ENCODE measurements at regions of chr5 and their contacts with region 1.

Region 1: GRCh38 chr5:99060306-99061261 is 131.8 kb upstream of the CHD1 start:
- DNase-seq: peak; percentile 66
- H3K4me3 ChIP-seq: no peak overlapping the region
- H3K27ac ChIP-seq: no peak overlapping the region
- H3K4me1 ChIP-seq: no peaks in the 10 kb centered on the region
- CTCF ChIP-seq: peak; percentile 99

Region 2: DNA sequence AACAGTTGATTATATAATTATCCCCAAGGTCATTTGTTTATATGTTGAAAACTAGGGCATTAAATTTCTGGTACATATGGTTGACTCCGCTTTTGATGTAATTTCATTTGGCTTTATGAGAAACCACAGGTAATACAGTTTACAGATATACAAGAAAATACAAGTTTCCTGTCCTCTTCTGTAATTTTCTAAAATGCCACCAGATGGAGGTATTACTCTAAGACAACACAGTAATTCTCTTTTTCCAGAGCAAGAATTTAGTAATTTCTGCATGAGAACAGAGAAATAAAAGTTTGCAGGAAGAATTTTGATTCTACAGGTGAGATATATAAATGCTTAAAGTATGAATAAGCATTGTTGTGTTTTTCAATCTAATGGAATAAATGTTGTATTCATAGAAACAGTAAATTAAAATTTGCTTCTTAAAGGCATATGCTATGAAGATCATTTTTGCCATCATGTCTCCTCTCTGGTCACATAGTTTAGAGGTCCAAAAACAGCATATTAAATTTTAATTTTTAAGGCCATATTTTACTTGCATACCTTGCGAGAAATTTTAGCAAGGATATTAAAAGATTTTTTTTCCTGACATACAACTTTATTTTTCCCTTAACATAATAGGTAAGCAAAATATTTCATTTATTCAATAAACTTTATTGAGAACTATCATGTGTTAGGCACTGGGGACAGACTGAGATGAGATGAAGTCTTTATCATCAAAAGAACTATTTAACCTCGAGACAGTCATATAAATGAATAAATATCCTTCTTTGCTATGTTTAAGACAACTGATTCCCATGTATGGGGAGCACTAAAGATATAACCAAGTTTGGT is 154.5 kb before region 1 on chr5:
- CTCF ChIA-PET with region 1: no interaction called
- POLR2A ChIA-PET with region 1: no interaction called
- intact Hi-C with region 1: loop called (anchors 1 kb)
- DNase-seq: peak; percentile 49
- H3K4me3 ChIP-seq: no peak overlapping the region
- H3K27ac ChIP-seq: no peak overlapping the region
- H3K4me1 ChIP-seq: no peaks in the 10 kb centered on the region
- CTCF ChIP-seq: peak; percentile 92

Region 3: GRCh38 chr5:99019812-99020697 is 40.5 kb before region 1 on chr5:
- CTCF ChIA-PET with region 1: no interaction called
- POLR2A ChIA-PET with region 1: no interaction called
- intact Hi-C with region 1: no loop called
- DNase-seq: no peak
- H3K4me3 ChIP-seq: no peak overlapping the region
- H3K27ac ChIP-seq: no peak overlapping the region
- H3K4me1 ChIP-seq: no peaks in the 10 kb centered on the region
- CTCF ChIP-seq: no peak

Region 4: DNA sequence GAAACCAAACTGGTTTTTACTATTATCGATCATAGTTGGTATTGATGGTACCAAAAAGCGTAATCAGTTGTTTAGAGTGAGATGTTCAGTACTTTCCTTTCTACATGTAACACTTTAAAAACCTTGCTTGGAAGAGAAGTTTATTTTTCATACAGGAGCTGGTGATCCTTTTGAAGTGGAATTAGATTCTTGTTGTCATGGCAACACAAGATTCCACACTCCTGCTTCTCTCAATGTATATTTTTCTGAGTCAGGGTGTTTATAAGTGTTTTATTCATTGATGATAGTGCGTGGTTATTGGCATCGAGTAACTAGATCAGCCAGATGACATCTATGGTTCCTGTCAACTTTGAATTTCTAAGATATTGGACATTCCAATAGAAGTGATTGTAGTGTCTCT is 49.3 kb after region 1 on chr5:
- CTCF ChIA-PET with region 1: no interaction called
- POLR2A ChIA-PET with region 1: no interaction called
- intact Hi-C with region 1: no loop called
- DNase-seq: no peak
- H3K4me3 ChIP-seq: no peak overlapping the region
- H3K27ac ChIP-seq: no peak overlapping the region
- H3K4me1 ChIP-seq: no peaks in the 10 kb centered on the region
- CTCF ChIP-seq: no peak